ENCODE measurements at regions of chr14 and their contacts with region 1.

Region 1: DNA sequence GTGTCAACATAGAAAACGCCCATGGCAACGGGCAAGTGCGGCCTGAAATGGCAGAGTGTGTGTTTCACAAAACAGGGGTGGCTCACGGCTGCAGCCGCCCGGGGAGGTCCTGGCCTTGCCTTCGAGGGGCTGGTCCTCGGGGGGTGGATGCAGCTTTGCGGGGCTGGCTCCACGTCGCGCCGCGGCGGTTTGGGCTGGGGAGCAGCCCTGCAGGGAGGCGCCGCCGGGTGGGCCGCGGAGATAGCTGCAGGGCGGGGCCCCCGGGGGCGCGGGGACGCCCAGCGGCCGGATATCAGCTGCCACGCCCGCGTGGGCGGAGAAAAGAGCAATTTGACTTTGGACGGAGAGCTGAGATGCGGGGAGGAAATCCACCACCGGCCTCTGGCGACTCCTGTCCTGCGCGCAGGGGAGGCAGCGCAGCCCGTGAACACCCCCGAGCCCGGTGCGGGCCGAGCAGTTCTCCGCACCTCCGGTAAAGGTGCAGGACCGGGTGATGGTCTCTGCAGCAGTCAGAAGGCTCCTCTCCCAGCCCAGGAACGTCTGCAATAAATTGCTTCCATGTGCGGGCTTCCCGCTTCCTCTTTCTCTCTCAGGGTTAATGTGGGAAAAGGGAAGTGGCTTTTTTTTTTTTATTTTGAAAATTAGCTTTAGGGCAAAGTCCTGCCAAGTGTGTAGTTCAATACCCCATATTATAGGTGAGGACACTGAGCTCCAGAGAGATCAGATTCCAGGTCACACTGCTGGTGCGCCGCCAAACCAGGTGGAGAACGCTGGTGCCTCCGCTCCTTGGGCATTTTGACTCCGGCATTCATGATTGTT is 110.5 kb downstream of the ARF6 start:
- DNase-seq: peak; percentile 89 to 92
- ATAC-seq: peak; percentile 74
- H3K4me3 ChIP-seq: peak overlapping the region; percentile 3 to 25
- H3K27ac ChIP-seq: peak overlapping the region; percentile 78 to 99
- H3K4me1 ChIP-seq: peaks cover 2 to 7% of the 10 kb centered on the region in 2 donors
- H3K27me3 ChIP-seq: no peaks in the 10 kb centered on the region

Region 2: GRCh38 chr14:49892636-49893308 is 110.7 kb before region 1 on chr14 and contains the start of gene ARF6:
- intact Hi-C with region 1: loop called (anchors 5 to 10 kb)
- DNase-seq: peak; percentile 99 to 100
- ATAC-seq: peak; percentile 99
- H3K4me3 ChIP-seq: peak within 1 kb of the TSS; percentile 87 to 89
- H3K27ac ChIP-seq: peak within 1 kb of the TSS; percentile 94 to 98
- H3K4me1 ChIP-seq: no peaks in the 10 kb centered on the region
- H3K27me3 ChIP-seq: no peaks in the 10 kb centered on the region
- total RNA-seq, gene ARF6: 56.3 to 64.0 TPM

Region 3: DNA sequence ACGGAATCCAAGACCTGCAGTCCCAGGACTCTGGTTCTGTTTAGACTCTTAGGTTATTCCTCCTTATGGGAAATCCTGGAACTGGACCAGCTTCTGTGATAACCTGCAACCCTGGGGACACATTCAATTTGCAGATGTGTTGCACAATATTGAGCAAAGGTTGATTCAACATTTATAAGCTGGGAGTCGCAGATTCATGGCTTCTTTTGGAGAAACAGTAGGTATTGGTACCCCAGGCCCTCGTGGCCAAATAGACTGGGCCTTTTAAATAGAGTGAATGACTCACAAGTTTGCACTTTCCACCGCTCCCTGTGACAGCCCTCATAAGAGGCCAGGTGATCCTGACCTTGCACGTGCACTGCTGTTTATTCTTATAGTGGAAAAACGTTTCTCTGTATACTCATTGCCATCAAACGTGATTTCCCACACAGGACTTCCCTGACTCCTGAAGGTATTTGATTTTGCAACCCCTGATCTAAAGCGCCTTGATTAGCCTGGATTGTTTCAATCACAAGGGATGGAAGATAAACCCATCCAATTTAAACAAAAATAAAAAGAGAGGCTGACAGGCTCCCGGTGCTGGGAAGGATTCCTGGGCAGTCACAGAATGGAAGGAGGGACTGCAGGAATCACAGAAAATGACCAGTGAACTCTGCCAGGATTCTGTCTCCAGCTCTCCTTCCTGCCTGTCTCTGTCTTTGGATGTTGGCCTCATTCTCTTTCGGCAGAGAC is 14.9 kb after region 1 on chr14:
- intact Hi-C with region 1: loop called in 1 of 2 experiments (anchors 2 kb)
- DNase-seq: peak in 1 of 2 donors; percentile 68
- ATAC-seq: peak; percentile 80
- H3K4me3 ChIP-seq: no peak overlapping the region
- H3K27ac ChIP-seq: peak overlapping the region; percentile 68 to 94
- H3K4me1 ChIP-seq: peaks cover 2 to 4% of the 10 kb centered on the region in 2 donors
- H3K27me3 ChIP-seq: no peaks in the 10 kb centered on the region

Region 4: DNA sequence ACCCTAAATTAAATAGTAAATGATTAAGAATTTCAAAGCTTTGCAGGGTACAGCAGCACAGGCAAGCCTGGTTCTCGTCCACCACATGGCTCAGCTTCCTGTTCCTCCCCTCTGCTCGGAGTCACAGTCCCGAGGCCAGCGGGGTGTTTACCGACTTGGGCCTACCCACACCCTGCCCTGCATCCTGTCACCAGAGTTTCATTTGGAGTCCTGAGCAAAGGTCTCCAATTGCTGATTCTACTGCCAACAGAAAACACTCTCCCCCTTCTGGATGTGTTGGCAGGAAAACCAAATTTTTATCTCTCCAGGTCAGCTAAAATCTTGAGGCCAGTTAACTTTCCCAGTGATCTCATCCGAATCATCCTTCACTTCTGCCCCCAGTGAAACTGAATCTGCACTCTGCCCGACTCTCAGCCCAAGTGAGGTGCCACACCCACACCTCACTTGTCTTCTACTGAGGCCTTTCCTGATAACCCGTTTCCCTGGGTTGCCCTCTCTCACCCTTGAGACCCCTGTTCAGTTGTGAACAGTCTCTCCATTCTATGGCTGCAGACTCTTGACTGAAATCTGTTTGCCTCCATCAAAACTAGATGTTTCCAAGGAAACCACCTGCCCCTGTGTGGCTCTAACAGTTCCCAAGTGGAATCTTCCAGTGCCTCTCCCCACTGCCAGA is 41.8 kb after region 1 on chr14:
- intact Hi-C with region 1: loop called in 1 of 2 experiments (anchors 1 kb)
- DNase-seq: peak; percentile 90 to 96
- ATAC-seq: peak; percentile 90
- H3K4me3 ChIP-seq: no peak overlapping the region
- H3K27ac ChIP-seq: peak overlapping the region in 1 of 2 donors; percentile 86
- H3K4me1 ChIP-seq: peaks cover 0 to 9% of the 10 kb centered on the region in 2 donors
- H3K27me3 ChIP-seq: no peaks in the 10 kb centered on the region